ENCODE measurements at regions of chr1 and their contacts with region 1.

Region 1: GRCh38 chr1:78839704-78840277 is 166.7 kb downstream of the ADGRL4 start:
- DNase-seq: no peak
- ATAC-seq: peak; percentile 38 to 57

Region 2: GRCh38 chr1:79059341-79059740 is 219.6 kb after region 1 on chr1:
- intact Hi-C with region 1: no loop called
- DNase-seq: no peak
- ATAC-seq: no peak

Region 3: GRCh38 chr1:79197421-79197820 is 357.6 kb after region 1 on chr1:
- intact Hi-C with region 1: loop called (anchors 2 to 5 kb)
- DNase-seq: no peak
- ATAC-seq: no peak

Measured in left cardiac atrium (tissue), 4 donors.